GM12878 (cell line): ENCODE measurements at regions of chr22 and their contacts with region 1.

Region 1: GRCh38 chr22:36003972-36004674 is 24.5 kb downstream of the RBFOX2 start:
- DNase-seq: no peak
- ATAC-seq: no peak
- H3K4me3 ChIP-seq: no peak overlapping the region
- H3K27ac ChIP-seq: no peak overlapping the region
- H3K4me1 ChIP-seq: no peaks in the 10 kb centered on the region
- H3K27me3 ChIP-seq: no peaks in the 10 kb centered on the region
- CTCF ChIP-seq: no peak
- EP300 ChIP-seq: no peak
- POLR2A ChIP-seq: no peak
- RAD21 ChIP-seq: no peak

Region 2: DNA sequence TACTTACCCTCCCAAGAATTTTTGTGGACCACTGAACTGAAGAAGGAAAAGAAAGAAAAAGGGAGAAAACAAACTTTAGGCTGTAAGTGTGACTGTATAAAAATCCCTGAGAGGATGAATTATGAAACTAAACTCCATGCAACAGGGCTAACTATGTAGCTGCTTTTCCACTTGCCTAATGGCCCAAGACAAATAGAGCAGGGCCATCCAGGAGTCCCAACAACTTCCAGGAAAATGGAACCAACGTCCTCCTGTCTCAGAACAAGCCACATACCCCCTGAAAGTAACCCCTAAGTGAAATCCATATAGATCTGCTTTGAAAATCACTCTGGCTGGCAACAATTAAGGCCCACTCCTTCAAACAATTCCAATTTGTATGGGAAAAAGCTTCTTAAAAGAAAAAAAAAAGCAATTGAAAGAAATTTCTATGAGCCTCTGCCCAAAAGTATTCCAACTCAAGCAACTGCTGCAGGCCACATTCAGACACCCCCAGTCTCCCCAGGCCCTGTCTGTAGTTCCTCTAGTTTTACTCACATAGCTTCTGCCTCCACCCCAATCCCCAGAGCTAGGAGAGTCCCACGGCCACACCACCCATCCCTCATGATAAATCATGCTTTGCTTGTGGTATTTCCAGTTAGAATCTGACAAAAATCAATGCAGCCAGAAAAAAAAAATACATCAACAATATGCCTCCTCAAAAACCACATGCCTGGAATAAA is 11.8 kb after region 1 on chr22:
- CTCF ChIA-PET with region 1: interaction called, 4 read pairs
- POLR2A ChIA-PET with region 1: no interaction called
- RAD21 ChIA-PET with region 1: no interaction called
- SMC1A ChIA-PET with region 1: interaction called, 15 read pairs
- in situ Hi-C with region 1: no loop called
- intact Hi-C with region 1: no loop called
- DNase-seq: no peak
- ATAC-seq: no peak
- H3K4me3 ChIP-seq: no peak overlapping the region
- H3K27ac ChIP-seq: no peak overlapping the region
- H3K4me1 ChIP-seq: peaks cover 3% of the 10 kb centered on the region; the same call in 1 of the 2 replicates
- H3K27me3 ChIP-seq: no peaks in the 10 kb centered on the region; a peak in 2 of 4 replicates
- CTCF ChIP-seq: no peak
- EP300 ChIP-seq: no peak
- POLR2A ChIP-seq: no peak
- RAD21 ChIP-seq: no peak